Common myeloid progenitor, CD34-positive (primary cell): ENCODE measurements at regions of chr2 and their contacts with region 1.

Region 1: GRCh38 chr2:96856776-96857673 is 791 bp downstream of the ANKRD39 start:
- DNase-seq: peak in 2 of 3 donors; percentile 67
- H3K4me3 ChIP-seq: peak overlapping the region; percentile 49 to 82 (median 69)
- H3K27ac ChIP-seq: peak overlapping the region in 1 of 2 experiments; percentile 76
- H3K4me1 ChIP-seq: peaks cover 2 to 44% (median 43%) of the 10 kb centered on the region in 4 experiments
- H3K27me3 ChIP-seq: no peaks in the 10 kb centered on the region

Region 2: DNA sequence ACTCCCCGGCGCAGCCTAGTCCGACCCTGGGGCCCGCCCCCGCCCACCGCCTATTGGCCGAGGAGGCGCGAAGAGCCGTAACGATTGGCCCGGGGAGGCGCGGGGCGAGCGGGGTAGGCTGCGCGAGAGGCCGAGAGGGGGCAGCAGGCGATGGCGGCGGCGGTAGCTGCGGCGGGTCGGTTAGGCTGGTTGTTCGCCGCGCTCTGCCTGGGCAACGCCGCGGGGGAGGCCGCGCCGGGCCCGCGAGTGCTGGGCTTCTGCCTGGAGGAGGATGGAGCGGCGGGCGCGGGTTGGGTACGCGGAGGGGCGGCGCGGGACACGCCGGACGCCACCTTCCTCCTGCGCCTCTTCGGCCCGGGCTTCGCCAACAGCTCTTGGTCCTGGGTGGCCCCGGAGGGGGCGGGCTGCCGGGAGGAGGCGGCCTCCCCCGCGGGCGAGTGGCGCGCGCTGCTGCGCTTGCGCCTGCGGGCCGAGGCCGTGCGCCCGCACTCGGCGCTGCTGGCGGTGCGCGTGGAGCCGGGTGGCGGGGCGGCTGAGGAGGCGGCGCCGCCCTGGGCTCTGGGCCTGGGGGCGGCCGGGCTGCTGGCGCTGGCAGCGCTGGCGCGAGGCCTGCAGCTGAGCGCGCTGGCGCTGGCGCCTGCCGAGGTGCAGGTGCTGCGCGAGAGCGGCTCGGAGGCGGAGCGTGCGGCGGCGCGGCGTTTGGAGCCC is 40.7 kb before region 1 on chr2 and contains the start of gene CNNM3:
- CTCF ChIA-PET with region 1: interaction called, 22 read pairs
- POLR2A ChIA-PET with region 1: no interaction called
- DNase-seq: peak; percentile 92 to 96 (median 95)
- H3K4me3 ChIP-seq: peak within 1 kb of the TSS; percentile 77 to 90 (median 81)
- H3K27ac ChIP-seq: peak within 1 kb of the TSS in 1 of 2 experiments; percentile 58
- H3K4me1 ChIP-seq: peaks cover 12 to 51% (median 37%) of the 10 kb centered on the region in 4 experiments
- H3K27me3 ChIP-seq: no peaks in the 10 kb centered on the region

Region 3: DNA sequence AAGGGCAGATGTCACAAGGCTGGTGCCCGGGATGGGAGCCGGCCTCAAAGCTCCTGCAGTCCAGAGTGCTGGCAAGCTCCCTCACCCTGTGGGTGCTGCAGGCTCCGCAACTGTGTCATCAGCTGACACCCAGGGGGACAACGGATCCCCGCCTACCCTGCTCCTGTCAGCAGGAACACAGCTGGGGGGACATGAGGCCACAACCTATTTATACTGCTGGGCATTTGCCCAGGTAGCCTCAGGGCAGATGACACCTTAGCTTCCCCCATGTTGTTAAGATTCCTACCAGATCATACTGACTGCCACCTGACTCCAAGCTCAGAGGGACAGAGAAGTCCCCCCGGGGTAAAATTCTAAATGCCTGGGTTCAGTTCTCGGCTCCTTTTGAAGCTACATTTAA is 14.4 kb before region 1 on chr2:
- CTCF ChIA-PET with region 1: interaction called, 11 read pairs
- POLR2A ChIA-PET with region 1: interaction called, 5 read pairs
- DNase-seq: no peak
- H3K4me3 ChIP-seq: no peak overlapping the region
- H3K27ac ChIP-seq: no peak overlapping the region
- H3K4me1 ChIP-seq: peaks cover 0 to 18% (median 14%) of the 10 kb centered on the region in 4 experiments
- H3K27me3 ChIP-seq: no peaks in the 10 kb centered on the region

Region 4: GRCh38 chr2:96868555-96869280 is 11.7 kb after region 1 on chr2:
- CTCF ChIA-PET with region 1: interaction called, 27 read pairs
- POLR2A ChIA-PET with region 1: no interaction called
- DNase-seq: peak; percentile 65 to 81 (median 77)
- H3K4me3 ChIP-seq: peak overlapping the region; percentile 67 to 85 (median 71)
- H3K27ac ChIP-seq: peak overlapping the region in 1 of 2 experiments; percentile 64
- H3K4me1 ChIP-seq: peaks cover 0 to 43% (median 40%) of the 10 kb centered on the region in 4 experiments
- H3K27me3 ChIP-seq: peaks cover 0 to 5% (median 3%) of the 10 kb centered on the region in 5 experiments

Region 5: GRCh38 chr2:96945012-96945804 is 88.2 kb after region 1 on chr2:
- CTCF ChIA-PET with region 1: interaction called, 44 read pairs
- POLR2A ChIA-PET with region 1: no interaction called
- DNase-seq: no peak
- H3K4me3 ChIP-seq: no peak overlapping the region
- H3K27ac ChIP-seq: no peak overlapping the region
- H3K4me1 ChIP-seq: peaks cover 0 to 8% (median 3%) of the 10 kb centered on the region in 4 experiments
- H3K27me3 ChIP-seq: peaks cover 0 to 2% (median 0%) of the 10 kb centered on the region in 5 experiments

Region 6: GRCh38 chr2:96951093-96951654 is 94.1 kb after region 1 on chr2:
- CTCF ChIA-PET with region 1: interaction called, 44 read pairs
- POLR2A ChIA-PET with region 1: interaction called, 5 read pairs
- DNase-seq: peak; percentile 67 to 78 (median 76)
- H3K4me3 ChIP-seq: no peak overlapping the region
- H3K27ac ChIP-seq: no peak overlapping the region
- H3K4me1 ChIP-seq: peaks cover 0 to 29% (median 24%) of the 10 kb centered on the region in 4 experiments
- H3K27me3 ChIP-seq: peaks cover 0 to 2% (median 0%) of the 10 kb centered on the region in 5 experiments

Region 7: DNA sequence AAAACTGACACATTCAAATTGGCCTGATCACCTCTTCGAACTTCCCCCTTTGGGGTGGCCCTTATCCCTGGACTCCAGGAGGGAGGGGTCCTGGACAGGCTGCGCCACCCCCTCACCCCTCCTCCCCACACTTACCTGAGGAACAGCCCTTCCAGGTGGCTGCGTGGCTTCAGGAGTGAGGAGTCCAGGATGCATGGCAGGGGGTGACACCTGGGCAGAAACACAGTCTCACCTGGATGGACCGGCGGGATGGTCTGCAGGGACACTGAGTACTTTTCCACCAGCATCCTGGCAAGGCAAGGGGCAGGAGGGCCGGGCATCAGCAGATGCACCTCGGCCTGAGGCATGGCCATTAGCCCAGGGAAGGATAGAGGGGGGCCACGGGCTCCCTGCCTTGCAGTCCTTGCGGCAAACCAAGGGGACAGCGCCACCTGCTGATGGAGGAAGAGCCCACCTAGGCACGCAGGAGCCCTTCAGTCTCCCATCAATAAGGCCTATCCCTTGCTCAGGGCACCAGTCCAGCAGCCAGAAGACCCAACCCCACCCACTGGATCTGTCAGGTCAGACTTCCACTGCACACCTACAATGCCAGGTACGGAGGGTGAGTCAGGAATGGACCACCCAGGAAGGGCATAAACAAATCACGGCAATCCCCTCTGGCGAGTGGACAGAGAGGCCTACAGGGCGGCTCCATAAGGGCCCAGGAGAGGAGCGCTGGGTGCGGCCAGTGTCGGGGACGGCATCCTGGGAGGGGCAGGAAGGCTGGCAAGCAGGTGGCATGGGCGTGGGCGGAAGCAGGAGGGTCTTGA is 103.3 kb after region 1 on chr2:
- CTCF ChIA-PET with region 1: interaction called, 31 read pairs
- POLR2A ChIA-PET with region 1: no interaction called
- DNase-seq: peak; percentile 85 to 90 (median 86)
- H3K4me3 ChIP-seq: no peak overlapping the region
- H3K27ac ChIP-seq: no peak overlapping the region
- H3K4me1 ChIP-seq: peaks cover 0 to 33% (median 29%) of the 10 kb centered on the region in 4 experiments
- H3K27me3 ChIP-seq: no peaks in the 10 kb centered on the region